OCI-LY7 (cell line): ENCODE measurements at regions of chr11 and their contacts with region 1.

Region 1: GRCh38 chr11:313787-314547 is at the start of gene IFITM1:
- DNase-seq: peak; percentile 73
- H3K4me3 ChIP-seq: peak within 1 kb of the TSS; percentile 67
- H3K27ac ChIP-seq: peak within 1 kb of the TSS; percentile 76
- H3K4me1 ChIP-seq: peaks cover 44% of the 10 kb centered on the region
- CTCF ChIP-seq: peak; percentile 49
- total RNA-seq, gene IFITM1: 30.3 and 36.4 TPM in 2 replicates

Region 2: DNA sequence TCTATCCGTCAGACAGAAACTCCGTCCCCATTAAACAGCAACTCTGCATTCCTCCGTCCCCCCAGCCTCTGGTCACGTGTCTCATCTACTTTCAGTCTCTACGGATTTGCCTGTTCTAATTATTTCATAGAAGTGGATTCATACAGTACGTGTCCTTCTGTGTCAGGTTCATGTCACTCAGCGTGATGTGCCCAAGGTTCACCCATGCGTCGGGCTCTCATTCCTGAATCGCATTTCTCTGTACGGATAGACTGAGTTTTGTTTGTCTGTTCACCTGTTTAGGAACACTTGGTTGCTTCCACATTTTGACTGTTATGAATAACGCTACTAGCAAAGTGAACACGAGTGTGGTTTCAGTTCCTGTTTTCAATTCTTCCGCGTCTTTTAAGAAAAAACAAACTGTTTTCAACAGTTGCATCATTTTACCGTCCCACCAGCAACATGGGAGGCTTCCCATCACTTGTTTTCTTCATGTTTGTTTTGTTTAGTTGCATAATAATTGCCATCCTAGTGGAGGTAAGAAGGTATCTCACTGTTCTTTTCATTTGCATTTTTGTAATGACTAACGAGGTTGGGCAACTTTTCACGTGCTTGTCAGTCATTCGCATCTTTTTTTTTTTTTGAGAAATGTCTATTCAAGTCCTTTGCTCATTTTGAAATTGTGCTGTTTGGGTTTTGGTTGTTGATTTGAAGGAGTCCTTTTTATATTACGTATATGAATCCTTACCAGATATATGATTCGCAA is 44.6 kb before region 1 on chr11:
- CTCF ChIA-PET with region 1: no interaction called
- POLR2A ChIA-PET with region 1: interaction called, 4 read pairs
- intact Hi-C with region 1: loop called (anchors 2 kb)
- DNase-seq: peak; percentile 99
- H3K4me3 ChIP-seq: peak overlapping the region; percentile 62
- H3K27ac ChIP-seq: peak overlapping the region; percentile 92
- H3K4me1 ChIP-seq: peaks cover 31% of the 10 kb centered on the region
- CTCF ChIP-seq: no peak

Region 3: DNA sequence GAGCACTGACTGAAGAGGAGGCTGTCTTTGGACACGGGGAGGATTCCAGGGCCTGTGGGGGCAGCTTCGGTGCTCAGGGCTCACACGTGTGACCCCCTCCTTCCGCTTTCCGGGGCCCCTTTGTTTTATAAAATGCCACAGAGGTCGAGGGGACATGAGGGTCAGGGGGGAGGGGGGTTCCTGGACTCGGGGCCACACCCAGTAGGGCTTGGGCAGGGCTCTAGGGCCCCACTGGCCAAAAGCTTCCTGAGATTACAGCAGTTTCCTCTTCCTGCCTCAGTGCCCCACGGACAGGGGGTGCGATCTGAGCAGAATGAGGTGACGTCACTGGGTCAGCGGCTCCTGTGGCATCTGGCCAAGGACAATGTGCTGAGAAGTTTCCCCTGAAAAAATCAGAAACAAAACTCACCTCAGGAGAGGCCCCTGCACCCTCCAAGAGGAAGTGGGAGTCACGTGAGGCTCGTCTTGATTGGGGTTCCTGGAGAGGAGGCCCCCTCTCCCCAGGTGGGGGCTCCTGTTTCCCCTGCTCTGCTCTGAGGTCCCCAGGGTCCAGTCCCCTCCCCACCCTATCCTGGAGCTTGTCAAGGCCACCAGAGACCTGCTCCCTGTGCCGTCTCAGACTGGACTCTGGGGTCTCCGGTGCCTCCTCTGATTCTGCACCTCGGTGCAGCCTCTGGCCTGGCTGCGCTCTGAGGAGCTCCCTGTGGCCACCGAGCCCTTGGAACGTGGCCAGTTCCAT is 13.0 kb after region 1 on chr11:
- CTCF ChIA-PET with region 1: interaction called, 4 read pairs
- POLR2A ChIA-PET with region 1: interaction called, 17 read pairs
- intact Hi-C with region 1: no loop called
- DNase-seq: peak; percentile 81
- H3K4me3 ChIP-seq: peak overlapping the region; percentile 44
- H3K27ac ChIP-seq: peak overlapping the region; percentile 75
- H3K4me1 ChIP-seq: peaks cover 61% of the 10 kb centered on the region
- CTCF ChIP-seq: no peak; the same call in 1 of the 2 replicates

Region 4: DNA sequence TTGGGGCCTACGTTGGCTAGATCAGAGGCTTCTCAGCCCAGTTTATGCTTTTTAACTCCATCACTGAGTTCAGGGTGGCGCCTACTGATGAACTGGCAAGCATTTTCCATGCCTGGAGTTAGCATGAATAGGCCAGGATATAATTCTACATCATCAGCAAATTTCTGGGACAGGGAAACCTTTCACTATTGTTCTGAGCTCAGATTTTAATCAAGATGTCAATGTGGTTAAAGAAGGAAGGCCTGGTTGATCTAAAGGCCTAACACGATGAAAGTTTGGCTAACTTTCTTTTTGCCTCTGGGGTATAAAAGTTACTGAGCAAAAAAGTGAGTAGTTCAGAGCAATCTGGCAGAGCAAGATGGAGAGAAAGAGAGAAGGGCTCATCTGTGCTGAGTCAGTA is 28.4 kb after region 1 on chr11:
- CTCF ChIA-PET with region 1: interaction called, 5 read pairs
- POLR2A ChIA-PET with region 1: interaction called, 18 read pairs
- intact Hi-C with region 1: no loop called
- DNase-seq: no peak
- H3K4me3 ChIP-seq: no peak overlapping the region
- H3K27ac ChIP-seq: peak overlapping the region; percentile 57
- H3K4me1 ChIP-seq: peaks cover 35% of the 10 kb centered on the region
- CTCF ChIP-seq: no peak

Region 5: GRCh38 chr11:355581-356458 is 41.9 kb after region 1 on chr11:
- CTCF ChIA-PET with region 1: interaction called, 3 read pairs
- POLR2A ChIA-PET with region 1: interaction called, 8 read pairs
- intact Hi-C with region 1: loop called (anchors 2 kb)
- DNase-seq: peak; percentile 81
- H3K4me3 ChIP-seq: peak overlapping the region; percentile 55
- H3K27ac ChIP-seq: peak overlapping the region; percentile 73
- H3K4me1 ChIP-seq: peaks cover 41% of the 10 kb centered on the region
- CTCF ChIP-seq: no peak